BJ (cell line): ENCODE measurements at regions of chr17 and their contacts with region 1.

Region 1: GRCh38 chr17:41446806-41447205 is 6.0 kb upstream of the KRT38 start:
- DNase-seq: peak; percentile 77
- H3K4me3 ChIP-seq: no peak overlapping the region
- H3K27me3 ChIP-seq: no peaks in the 10 kb centered on the region
- CTCF ChIP-seq: no peak

Region 2: GRCh38 chr17:41688699-41689496 is 242.1 kb after region 1 on chr17 and contains the start of gene EIF1:
- CTCF ChIA-PET with region 1: no interaction called
- POLR2A ChIA-PET with region 1: interaction called, 14 read pairs
- DNase-seq: peak; percentile 97
- H3K4me3 ChIP-seq: peak within 1 kb of the TSS; percentile 96
- H3K27me3 ChIP-seq: peaks cover 2% of the 10 kb centered on the region; the same call in 1 of the 2 replicates
- CTCF ChIP-seq: no peak
- polyA plus RNA-seq, gene EIF1: 251 and 479 TPM in 2 replicates